ENCODE measurements at regions of chr3 and their contacts with region 1.

Region 1: GRCh38 chr3:15377961-15378791 is 45.8 kb upstream of the SH3BP5 start:
- DNase-seq: peak in 1 of 2 donors; percentile 95
- H3K4me3 ChIP-seq: no peak overlapping the region
- H3K27ac ChIP-seq: peak overlapping the region; percentile 61
- H3K4me1 ChIP-seq: peaks cover 5% of the 10 kb centered on the region
- H3K27me3 ChIP-seq: no peaks in the 10 kb centered on the region
- CTCF ChIP-seq: peak; percentile 67 to 97 (median 91)
- POLR2A ChIP-seq: no peak

Region 2: GRCh38 chr3:13916375-13916774 is 1461.8 kb before region 1 on chr3:
- intact Hi-C with region 1: no loop called
- DNase-seq: no peak
- H3K4me3 ChIP-seq: no peak overlapping the region
- H3K27ac ChIP-seq: no peak overlapping the region
- H3K4me1 ChIP-seq: no peaks in the 10 kb centered on the region
- H3K27me3 ChIP-seq: no peaks in the 10 kb centered on the region
- CTCF ChIP-seq: no peak
- POLR2A ChIP-seq: no peak

Region 3: DNA sequence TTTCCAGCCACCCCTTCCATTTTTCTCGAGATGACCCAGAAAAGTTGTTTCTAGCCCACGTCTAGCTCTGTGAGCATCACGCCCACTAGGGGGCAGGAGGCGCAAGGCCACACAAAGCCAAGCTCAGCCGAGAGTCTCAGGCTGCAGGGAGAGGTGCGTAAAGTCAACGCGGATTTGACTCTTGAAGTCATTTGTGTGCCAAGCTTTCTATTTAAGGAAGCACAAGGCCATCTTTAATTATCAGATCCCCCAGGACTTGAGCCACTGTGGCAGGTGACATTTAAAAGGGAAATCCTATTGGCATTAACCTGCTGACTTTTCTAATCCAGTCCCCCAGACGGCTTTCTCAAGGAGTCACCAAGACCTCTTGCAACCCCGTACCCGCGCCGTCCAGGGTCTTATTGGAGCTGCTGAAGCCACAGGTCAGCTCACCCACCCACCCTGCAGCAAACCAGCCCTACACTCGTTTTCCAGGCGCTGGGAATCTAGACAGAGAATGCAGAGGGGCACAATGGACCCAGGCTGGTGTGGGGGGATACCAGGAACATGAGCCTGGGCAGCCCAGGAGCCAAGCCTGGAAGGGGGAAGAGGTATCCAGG is 110.0 kb before region 1 on chr3:
- intact Hi-C with region 1: loop called (anchors 2 kb)
- DNase-seq: peak; percentile 90 to 93
- H3K4me3 ChIP-seq: no peak overlapping the region
- H3K27ac ChIP-seq: peak overlapping the region; percentile 81
- H3K4me1 ChIP-seq: peaks cover 58% of the 10 kb centered on the region
- H3K27me3 ChIP-seq: no peaks in the 10 kb centered on the region
- CTCF ChIP-seq: peak; percentile 83 to 95 (median 93)
- POLR2A ChIP-seq: no peak

Region 4: DNA sequence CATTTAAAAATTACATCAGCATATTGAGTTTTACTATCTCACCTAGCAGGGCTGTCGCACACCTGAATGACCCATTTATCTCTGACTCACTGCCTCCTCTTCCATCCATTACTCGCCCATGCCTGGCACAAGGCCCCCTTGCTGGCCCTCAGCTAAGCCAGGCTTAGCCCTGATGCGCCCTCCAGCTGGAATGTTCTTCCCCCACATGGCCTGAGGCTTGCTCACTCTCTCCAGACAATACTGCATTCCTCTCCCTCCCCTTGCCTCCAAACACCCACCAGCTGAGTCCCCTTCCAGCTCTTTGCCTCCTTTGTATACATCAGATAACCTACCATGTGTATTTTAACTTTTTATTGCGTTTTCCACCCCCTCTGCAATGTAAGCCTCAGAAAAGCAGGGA is 52.9 kb before region 1 on chr3:
- intact Hi-C with region 1: no loop called
- DNase-seq: no peak
- H3K4me3 ChIP-seq: no peak overlapping the region
- H3K27ac ChIP-seq: peak overlapping the region; percentile 95
- H3K4me1 ChIP-seq: peaks cover 91% of the 10 kb centered on the region
- H3K27me3 ChIP-seq: no peaks in the 10 kb centered on the region
- CTCF ChIP-seq: no peak
- POLR2A ChIP-seq: no peak